Activated CD8-positive, alpha-beta T cell treated with anti-CD3 and anti-CD28 coated beads, Interleukin-2, amount 10 ng/mL, durations not matched to agents 7 days and 5 days (primary cell): ENCODE measurements at regions of chr15 and their contacts with region 1.

Region 1: DNA sequence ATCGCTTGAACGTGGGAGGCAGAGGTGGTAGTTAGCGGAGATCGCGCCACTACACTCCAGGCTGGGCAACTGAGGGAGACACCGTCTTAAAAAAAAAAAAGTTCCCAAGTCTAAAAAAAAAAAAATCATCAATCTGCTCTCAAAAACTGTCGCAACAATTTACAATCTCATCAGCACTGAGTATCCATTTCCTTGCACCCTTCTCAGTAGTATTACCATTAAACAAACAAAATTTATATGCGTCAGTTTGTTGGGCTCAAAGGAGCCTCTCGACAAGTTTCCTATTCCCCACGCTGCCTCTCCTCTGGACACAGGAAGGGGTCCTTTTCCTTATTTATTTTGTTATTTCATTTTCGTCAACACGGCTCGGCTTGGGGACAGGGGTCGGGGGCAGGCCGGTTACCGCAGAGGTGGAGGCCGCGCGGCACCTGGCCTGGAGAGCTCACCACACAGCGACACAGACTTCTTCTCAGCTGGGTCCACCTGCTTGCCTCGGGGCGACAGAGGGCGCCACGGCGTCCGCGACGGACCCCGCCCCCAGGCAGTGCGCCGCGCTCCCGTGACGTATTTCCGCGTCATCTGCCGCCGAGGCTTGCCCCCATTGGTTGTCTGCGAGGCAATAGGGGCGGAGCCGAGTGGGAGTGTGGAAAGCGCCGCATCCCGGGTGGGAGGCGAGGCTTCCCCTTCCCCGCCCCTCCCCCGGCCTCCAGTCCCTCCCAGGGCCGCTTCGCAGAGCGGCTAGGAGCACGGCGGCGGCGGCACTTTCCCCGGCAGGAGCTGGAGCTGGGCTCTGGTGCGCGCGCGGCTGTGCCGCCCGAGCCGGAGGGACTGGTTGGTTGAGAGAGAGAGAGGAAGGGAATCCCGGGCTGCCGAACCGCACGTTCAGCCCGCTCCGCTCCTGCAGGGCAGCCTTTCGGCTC is at the start of gene MAP2K1:
- DNase-seq: peak; percentile 99
- ATAC-seq: peak; percentile 83
- H3K4me3 Mint-ChIP-seq: peak within 1 kb of the TSS; percentile 95
- H3K27ac Mint-ChIP-seq: peak within 1 kb of the TSS; percentile 98
- H3K4me1 Mint-ChIP-seq: peaks cover 45% of the 10 kb centered on the region
- H3K27me3 Mint-ChIP-seq: no peaks in the 10 kb centered on the region
- total RNA-seq, gene MAP2K1: 108 to 118 TPM

Region 2: GRCh38 chr15:66356345-66357236 is 29.9 kb before region 1 on chr15 and contains the start of gene TIPIN:
- CTCF ChIA-PET with region 1: interaction called, 8 read pairs
- POLR2A ChIA-PET with region 1: interaction called, 29 read pairs
- DNase-seq: peak; percentile 99
- ATAC-seq: peak; percentile 99
- H3K4me3 Mint-ChIP-seq: peak within 1 kb of the TSS; percentile 95
- H3K27ac Mint-ChIP-seq: peak within 1 kb of the TSS; percentile 97
- H3K4me1 Mint-ChIP-seq: peaks cover 42% of the 10 kb centered on the region
- H3K27me3 Mint-ChIP-seq: no peaks in the 10 kb centered on the region
- total RNA-seq, gene TIPIN: 36.4 to 42.7 TPM

Region 3: GRCh38 chr15:66369773-66370651 is 16.5 kb before region 1 on chr15:
- CTCF ChIA-PET with region 1: interaction called, 9 read pairs
- POLR2A ChIA-PET with region 1: interaction called, 19 read pairs
- DNase-seq: peak; percentile 69
- ATAC-seq: peak; percentile 83
- H3K4me3 Mint-ChIP-seq: peak overlapping the region; percentile 56
- H3K27ac Mint-ChIP-seq: peak overlapping the region; percentile 98
- H3K4me1 Mint-ChIP-seq: peaks cover 29% of the 10 kb centered on the region
- H3K27me3 Mint-ChIP-seq: no peaks in the 10 kb centered on the region

Region 4: DNA sequence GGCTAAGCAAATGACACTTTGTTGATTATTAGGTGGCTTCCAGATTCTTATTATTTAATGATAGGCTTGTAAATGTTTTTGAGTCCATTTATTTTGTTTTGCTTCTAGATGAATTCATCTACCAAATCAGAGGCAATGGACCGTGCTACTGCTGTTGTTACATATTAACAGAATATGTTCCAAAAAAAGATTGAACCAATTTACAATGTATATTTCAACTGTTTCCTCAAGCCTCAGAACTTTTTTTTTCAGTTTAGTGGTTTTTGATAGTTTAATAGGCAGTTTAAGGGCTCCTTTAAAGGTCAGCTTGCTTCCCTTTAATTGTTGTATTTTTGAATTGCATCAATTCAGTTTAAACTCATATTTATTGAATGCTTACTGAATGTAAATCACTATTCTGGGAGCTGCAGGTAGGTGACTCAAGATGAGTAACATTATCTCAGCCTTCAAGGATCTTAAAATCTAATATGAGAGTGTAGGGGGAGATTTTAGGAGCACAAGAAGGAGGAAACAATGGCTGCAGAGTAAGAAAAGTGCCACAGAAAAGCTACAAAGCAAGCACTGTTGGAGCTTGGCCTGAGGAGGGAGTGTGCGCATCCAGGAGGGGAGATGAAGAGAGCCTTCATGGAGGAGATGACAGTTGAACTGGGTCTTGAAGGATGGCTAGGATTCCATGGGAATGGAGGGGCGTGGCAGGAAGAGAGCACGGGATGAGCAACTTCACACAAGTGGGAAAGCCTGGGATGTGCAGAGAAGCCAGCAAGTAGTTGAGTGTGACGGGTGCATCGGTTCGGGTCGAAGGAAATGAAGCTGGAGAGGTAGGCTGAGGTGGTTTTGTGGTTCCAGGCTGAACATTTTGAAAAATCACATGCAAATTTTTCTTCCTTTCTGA is 14.9 kb after region 1 on chr15:
- CTCF ChIA-PET with region 1: interaction called, 17 read pairs
- POLR2A ChIA-PET with region 1: interaction called, 7 read pairs
- DNase-seq: peak; percentile 45
- ATAC-seq: peak; percentile 78
- H3K4me3 Mint-ChIP-seq: peak overlapping the region; percentile 67
- H3K27ac Mint-ChIP-seq: peak overlapping the region; percentile 86
- H3K4me1 Mint-ChIP-seq: peaks cover 77% of the 10 kb centered on the region
- H3K27me3 Mint-ChIP-seq: no peaks in the 10 kb centered on the region

Region 5: GRCh38 chr15:66411190-66411589 is 24.7 kb after region 1 on chr15:
- CTCF ChIA-PET with region 1: interaction called, 25 read pairs
- POLR2A ChIA-PET with region 1: interaction called, 3 read pairs
- DNase-seq: peak; percentile 46
- ATAC-seq: peak; percentile 57
- H3K4me3 Mint-ChIP-seq: peak overlapping the region; percentile 67
- H3K27ac Mint-ChIP-seq: peak overlapping the region; percentile 79
- H3K4me1 Mint-ChIP-seq: peaks cover 88% of the 10 kb centered on the region
- H3K27me3 Mint-ChIP-seq: no peaks in the 10 kb centered on the region

Region 6: DNA sequence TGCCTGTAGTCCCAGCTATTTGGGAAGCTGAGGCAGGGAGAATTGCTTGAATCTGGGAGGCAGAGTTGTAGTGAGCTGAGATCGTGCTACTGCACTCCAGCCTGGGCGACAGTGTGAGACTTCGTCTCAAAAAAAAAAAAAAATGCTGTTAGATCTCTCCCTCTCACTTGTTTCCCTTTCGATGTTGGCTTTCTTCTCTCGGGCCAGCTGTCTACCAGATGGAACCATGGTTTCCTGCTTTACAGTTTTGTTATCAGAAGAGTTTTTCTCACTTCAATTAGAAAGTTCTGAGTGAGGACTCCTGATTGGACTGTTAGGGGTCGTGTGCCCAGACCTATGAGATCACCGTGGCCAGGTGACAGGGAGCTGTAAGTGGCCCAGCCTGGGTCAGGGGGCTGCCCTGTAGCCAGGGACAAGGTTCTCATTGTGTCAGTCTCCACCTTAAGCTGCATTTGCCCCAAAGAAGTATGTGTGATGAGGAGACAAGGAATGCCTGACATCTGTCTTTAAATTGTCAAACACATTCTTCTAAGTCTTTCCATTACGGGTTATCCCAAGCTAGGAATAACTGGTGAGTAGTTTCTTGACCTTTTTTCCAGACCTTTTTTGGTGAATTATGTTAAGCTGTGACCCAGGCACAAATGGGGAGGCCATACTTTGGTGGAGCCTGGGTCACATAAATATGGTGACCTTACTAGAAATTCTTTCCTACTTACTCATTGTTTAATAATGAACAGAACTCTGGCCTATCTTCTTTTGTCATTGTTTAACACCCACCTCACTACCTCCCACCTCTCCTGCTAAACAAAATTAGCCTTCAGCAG is 85.9 kb after region 1 on chr15:
- CTCF ChIA-PET with region 1: interaction called, 29 read pairs
- POLR2A ChIA-PET with region 1: interaction called, 4 read pairs
- DNase-seq: peak; percentile 74
- ATAC-seq: peak; percentile 98
- H3K4me3 Mint-ChIP-seq: peak overlapping the region; percentile 26
- H3K27ac Mint-ChIP-seq: peak overlapping the region; percentile 77
- H3K4me1 Mint-ChIP-seq: peaks cover 40% of the 10 kb centered on the region
- H3K27me3 Mint-ChIP-seq: no peaks in the 10 kb centered on the region

Region 7: DNA sequence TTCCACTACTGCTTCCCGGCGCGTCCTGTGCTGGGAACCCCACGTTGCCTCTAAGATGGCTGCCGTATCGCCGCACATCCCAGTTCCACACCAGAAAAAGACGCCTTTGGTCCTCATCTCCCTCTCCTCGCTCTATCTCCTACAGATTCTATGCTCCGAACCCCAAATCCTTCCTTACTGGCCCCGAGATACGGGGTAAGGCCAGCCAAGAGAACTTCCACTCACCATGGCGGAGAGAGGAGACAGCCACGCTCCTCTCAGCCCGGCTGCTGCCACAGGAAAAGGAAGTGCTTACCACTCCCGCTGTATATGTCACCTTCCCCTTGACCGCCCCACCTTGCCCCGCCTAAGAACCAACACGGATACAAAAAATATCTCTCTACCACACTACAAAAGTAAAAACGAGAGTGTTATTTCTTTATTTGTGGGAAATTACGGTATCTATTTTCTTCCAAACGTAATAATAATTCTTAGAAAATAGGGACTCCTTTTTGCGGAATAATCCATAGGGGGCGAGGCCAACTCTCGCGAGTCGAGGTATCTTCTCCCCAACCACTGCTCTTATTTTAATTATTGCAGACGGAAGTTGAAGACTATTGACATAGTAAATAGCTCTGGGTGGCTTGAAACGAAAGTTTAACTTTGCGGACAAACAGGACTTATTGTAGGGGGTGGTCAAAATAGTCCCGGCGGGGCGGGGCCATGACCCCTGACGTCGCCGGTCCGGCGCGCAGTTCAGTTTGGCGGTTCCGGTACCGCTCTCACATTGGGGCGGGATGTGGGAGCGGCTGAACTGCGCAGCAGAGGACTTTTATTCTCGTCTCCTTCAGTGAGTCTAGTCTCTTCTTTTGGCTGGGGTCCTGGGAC is 118.3 kb after region 1 on chr15 and contains the starts of genes RPL4 and ZWILCH:
- CTCF ChIA-PET with region 1: interaction called, 126 read pairs
- POLR2A ChIA-PET with region 1: interaction called, 35 read pairs
- DNase-seq: peak; percentile 88
- ATAC-seq: peak; percentile 89
- H3K4me3 Mint-ChIP-seq: peak within 1 kb of the TSS; percentile 98
- H3K27ac Mint-ChIP-seq: peak within 1 kb of the TSS; percentile 99
- H3K4me1 Mint-ChIP-seq: peaks cover 61% of the 10 kb centered on the region
- H3K27me3 Mint-ChIP-seq: no peaks in the 10 kb centered on the region
- total RNA-seq, gene RPL4: 2,498 to 2,528 TPM
- total RNA-seq, gene ZWILCH: 37.2 to 44.8 TPM